Gastrocnemius medialis (tissue), 4 donors: ENCODE measurements at regions of chr13 and their contacts with region 1.

Region 1: GRCh38 chr13:25574437-25575411 is 202.9 kb downstream of the ATP8A2 start:
- DNase-seq: peak; percentile 42 to 72
- ATAC-seq: peak; percentile 94 to 97
- H3K4me3 ChIP-seq: no peak overlapping the region
- H3K27ac ChIP-seq: no peak overlapping the region
- H3K4me1 ChIP-seq: no peaks in the 10 kb centered on the region
- H3K27me3 ChIP-seq: peaks cover 0 to 2% (median 0%) of the 10 kb centered on the region in 3 donors
- CTCF ChIP-seq: peak; percentile 67 to 87 (median 78)
- POLR2A ChIP-seq: no peak

Region 2: DNA sequence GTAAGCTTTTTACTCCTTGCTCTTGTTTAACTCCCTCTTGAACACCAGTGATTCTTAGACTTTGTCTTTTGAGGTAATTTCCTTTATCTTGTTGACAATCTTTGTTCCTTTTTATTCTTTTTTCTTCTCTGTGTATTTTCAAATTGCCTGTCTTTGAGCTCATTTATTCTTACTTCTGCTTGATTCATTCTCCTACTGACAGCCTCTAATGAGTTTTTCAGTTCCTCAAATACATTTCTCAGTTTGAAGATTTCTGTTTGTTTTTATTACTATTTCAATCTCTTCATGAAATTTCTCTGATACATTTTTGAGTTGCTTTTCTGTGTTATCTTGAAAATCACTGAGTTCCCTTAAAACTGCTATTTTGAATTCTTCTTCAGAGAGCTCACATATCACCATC is 48.8 kb before region 1 on chr13:
- in situ Hi-C with region 1: no loop called
- intact Hi-C with region 1: no loop called
- DNase-seq: no peak
- ATAC-seq: no peak
- H3K4me3 ChIP-seq: no peak overlapping the region
- H3K27ac ChIP-seq: no peak overlapping the region
- H3K4me1 ChIP-seq: no peaks in the 10 kb centered on the region
- H3K27me3 ChIP-seq: no peaks in the 10 kb centered on the region
- CTCF ChIP-seq: no peak
- POLR2A ChIP-seq: no peak

Region 3: DNA sequence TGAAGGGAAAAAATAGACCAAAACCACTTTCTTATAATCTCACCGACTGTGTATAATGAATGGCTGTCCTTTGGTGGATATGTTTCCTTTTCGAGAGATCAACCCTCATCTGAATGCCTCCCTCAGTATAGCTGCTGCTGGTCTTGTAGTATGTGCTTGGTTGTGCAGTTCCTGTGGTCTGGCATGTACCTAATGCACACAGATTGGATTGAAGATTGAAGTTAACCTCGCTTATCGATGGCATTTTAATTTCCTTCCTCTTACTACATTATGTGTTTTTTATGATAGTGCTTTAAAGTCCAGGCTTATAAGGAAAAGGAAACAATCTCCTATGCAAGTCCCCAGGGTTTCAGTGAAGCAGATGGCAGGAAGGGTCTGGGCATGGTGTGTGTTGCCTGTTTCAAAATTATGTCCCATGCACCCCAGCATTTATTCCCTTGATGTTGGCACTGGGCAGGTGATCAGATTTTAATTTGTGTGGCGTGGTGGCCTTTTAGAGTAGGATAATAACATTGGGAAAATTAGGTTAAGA is 143.0 kb after region 1 on chr13:
- in situ Hi-C with region 1: no loop called
- intact Hi-C with region 1: loop called (anchors 10 kb)
- DNase-seq: no peak
- ATAC-seq: no peak
- H3K4me3 ChIP-seq: no peak overlapping the region
- H3K27ac ChIP-seq: no peak overlapping the region
- H3K4me1 ChIP-seq: no peaks in the 10 kb centered on the region
- H3K27me3 ChIP-seq: no peaks in the 10 kb centered on the region
- CTCF ChIP-seq: no peak
- POLR2A ChIP-seq: no peak

Region 4: GRCh38 chr13:26062844-26063444 is 488.2 kb after region 1 on chr13:
- in situ Hi-C with region 1: loop called (anchors 5 kb)
- intact Hi-C with region 1: loop called (anchors 2 kb)
- DNase-seq: no peak
- ATAC-seq: peak; percentile 34 to 60
- H3K4me3 ChIP-seq: no peak overlapping the region
- H3K27ac ChIP-seq: no peak overlapping the region
- H3K4me1 ChIP-seq: peaks cover 0 to 5% of the 10 kb centered on the region in 2 donors
- H3K27me3 ChIP-seq: no peaks in the 10 kb centered on the region
- CTCF ChIP-seq: peak; percentile 22 to 71 (median 49)
- POLR2A ChIP-seq: no peak